ENCODE measurements at regions of chr7 and their contacts with region 1.

Region 1: GRCh38 chr7:100705753-100706671 is at the start of gene POP7:
- DNase-seq: peak; percentile 98
- ATAC-seq: peak; percentile 94
- H3K4me3 Mint-ChIP-seq: peak within 1 kb of the TSS; percentile 93
- H3K27ac Mint-ChIP-seq: peak within 1 kb of the TSS; percentile 88
- H3K4me1 Mint-ChIP-seq: peaks cover 16% of the 10 kb centered on the region
- H3K27me3 Mint-ChIP-seq: no peaks in the 10 kb centered on the region
- CTCF ChIP-seq: no peak
- total RNA-seq, gene POP7: 21.5 and 21.7 TPM in 2 replicates

Region 2: DNA sequence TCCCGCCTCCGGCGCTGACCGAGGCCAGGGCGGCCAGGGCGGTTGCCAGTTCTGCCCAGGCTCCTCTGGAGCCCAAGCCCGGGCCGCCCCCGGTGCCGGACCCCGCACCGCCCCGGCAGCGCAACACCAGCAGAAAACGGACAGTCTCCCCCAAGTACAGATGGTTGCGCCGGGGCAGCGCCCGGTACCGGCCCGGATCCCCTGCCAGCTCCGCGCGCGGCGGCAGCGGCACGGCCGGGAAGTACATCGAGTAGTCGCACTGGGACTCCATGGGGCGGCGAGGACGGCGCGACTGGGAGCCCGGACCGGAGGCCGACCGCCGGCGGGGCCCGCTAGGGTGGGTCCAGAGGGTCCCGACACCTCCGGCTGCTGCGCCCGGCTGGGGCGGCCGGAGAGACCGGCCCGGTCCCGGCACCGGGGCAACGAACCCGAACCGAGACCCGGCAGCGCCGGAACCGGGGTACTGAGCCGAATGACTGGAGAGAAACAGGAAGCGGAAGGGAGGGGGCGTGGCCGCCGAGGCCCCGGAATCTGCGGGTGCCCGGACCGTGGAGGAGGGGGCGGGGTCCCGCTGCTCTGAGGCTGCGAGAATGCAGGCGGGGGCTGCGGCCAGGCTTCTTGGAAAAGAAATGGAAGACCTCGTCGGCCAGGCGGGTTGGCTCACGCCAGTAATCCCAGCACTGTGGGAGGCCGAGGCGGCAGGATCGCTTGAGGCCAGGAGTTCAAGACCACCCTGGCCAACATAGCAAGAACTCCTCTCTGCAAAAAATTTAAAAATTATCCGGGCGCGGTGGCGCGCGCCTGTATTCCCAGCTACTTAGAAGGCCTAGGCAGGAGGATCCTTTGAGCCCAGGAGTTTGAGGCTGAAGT is 547.5 kb before region 1 on chr7 and contains the start of gene TRAPPC14:
- CTCF ChIA-PET with region 1: no interaction called
- POLR2A ChIA-PET with region 1: interaction called, 13 read pairs
- intact Hi-C with region 1: no loop called
- DNase-seq: peak; percentile 93
- ATAC-seq: peak; percentile 89
- H3K4me3 Mint-ChIP-seq: peak within 1 kb of the TSS; percentile 85
- H3K27ac Mint-ChIP-seq: peak within 1 kb of the TSS; percentile 86
- H3K4me1 Mint-ChIP-seq: peaks cover 44% of the 10 kb centered on the region
- H3K27me3 Mint-ChIP-seq: no peaks in the 10 kb centered on the region
- CTCF ChIP-seq: no peak
- total RNA-seq, gene TRAPPC14: 55.7 and 65.3 TPM in 2 replicates

Region 3: GRCh38 chr7:100595188-100595587 is 110.8 kb before region 1 on chr7:
- CTCF ChIA-PET with region 1: no interaction called
- POLR2A ChIA-PET with region 1: no interaction called
- intact Hi-C with region 1: no loop called
- DNase-seq: no peak
- ATAC-seq: no peak
- H3K4me3 Mint-ChIP-seq: no peak overlapping the region
- H3K27ac Mint-ChIP-seq: no peak overlapping the region
- H3K4me1 Mint-ChIP-seq: no peaks in the 10 kb centered on the region
- H3K27me3 Mint-ChIP-seq: peaks cover 10% of the 10 kb centered on the region
- CTCF ChIP-seq: no peak

Region 4: GRCh38 chr7:100632951-100633717 is 72.9 kb before region 1 on chr7:
- CTCF ChIA-PET with region 1: interaction called, 22 read pairs
- POLR2A ChIA-PET with region 1: interaction called, 17 read pairs
- intact Hi-C with region 1: loop called (anchors 1 kb)
- DNase-seq: peak; percentile 63
- ATAC-seq: peak; percentile 71
- H3K4me3 Mint-ChIP-seq: peak overlapping the region; percentile 89
- H3K27ac Mint-ChIP-seq: peak overlapping the region; percentile 78
- H3K4me1 Mint-ChIP-seq: peaks cover 4% of the 10 kb centered on the region
- H3K27me3 Mint-ChIP-seq: no peaks in the 10 kb centered on the region
- CTCF ChIP-seq: no peak

Region 5: GRCh38 chr7:100673300-100673941 is 32.6 kb before region 1 on chr7 and contains the start of gene GNB2:
- CTCF ChIA-PET with region 1: interaction called, 3 read pairs
- POLR2A ChIA-PET with region 1: interaction called, 24 read pairs
- intact Hi-C with region 1: loop called (anchors 1 kb)
- DNase-seq: peak; percentile 99
- ATAC-seq: peak; percentile 67
- H3K4me3 Mint-ChIP-seq: peak within 1 kb of the TSS; percentile 97
- H3K27ac Mint-ChIP-seq: peak within 1 kb of the TSS; percentile 95
- H3K4me1 Mint-ChIP-seq: peaks cover 11% of the 10 kb centered on the region
- H3K27me3 Mint-ChIP-seq: no peaks in the 10 kb centered on the region
- CTCF ChIP-seq: no peak
- total RNA-seq, gene GNB2: 129 and 132 TPM in 2 replicates

Region 6: GRCh38 chr7:100803398-100804233 is 97.6 kb after region 1 on chr7:
- CTCF ChIA-PET with region 1: interaction called, 9 read pairs
- POLR2A ChIA-PET with region 1: interaction called, 4 read pairs
- intact Hi-C with region 1: loop called (anchors 2 kb)
- DNase-seq: peak; percentile 62
- ATAC-seq: peak; percentile 97
- H3K4me3 Mint-ChIP-seq: peak overlapping the region; percentile 76
- H3K27ac Mint-ChIP-seq: peak overlapping the region; percentile 84
- H3K4me1 Mint-ChIP-seq: peaks cover 36% of the 10 kb centered on the region
- H3K27me3 Mint-ChIP-seq: no peaks in the 10 kb centered on the region
- CTCF ChIP-seq: no peak

Region 7: DNA sequence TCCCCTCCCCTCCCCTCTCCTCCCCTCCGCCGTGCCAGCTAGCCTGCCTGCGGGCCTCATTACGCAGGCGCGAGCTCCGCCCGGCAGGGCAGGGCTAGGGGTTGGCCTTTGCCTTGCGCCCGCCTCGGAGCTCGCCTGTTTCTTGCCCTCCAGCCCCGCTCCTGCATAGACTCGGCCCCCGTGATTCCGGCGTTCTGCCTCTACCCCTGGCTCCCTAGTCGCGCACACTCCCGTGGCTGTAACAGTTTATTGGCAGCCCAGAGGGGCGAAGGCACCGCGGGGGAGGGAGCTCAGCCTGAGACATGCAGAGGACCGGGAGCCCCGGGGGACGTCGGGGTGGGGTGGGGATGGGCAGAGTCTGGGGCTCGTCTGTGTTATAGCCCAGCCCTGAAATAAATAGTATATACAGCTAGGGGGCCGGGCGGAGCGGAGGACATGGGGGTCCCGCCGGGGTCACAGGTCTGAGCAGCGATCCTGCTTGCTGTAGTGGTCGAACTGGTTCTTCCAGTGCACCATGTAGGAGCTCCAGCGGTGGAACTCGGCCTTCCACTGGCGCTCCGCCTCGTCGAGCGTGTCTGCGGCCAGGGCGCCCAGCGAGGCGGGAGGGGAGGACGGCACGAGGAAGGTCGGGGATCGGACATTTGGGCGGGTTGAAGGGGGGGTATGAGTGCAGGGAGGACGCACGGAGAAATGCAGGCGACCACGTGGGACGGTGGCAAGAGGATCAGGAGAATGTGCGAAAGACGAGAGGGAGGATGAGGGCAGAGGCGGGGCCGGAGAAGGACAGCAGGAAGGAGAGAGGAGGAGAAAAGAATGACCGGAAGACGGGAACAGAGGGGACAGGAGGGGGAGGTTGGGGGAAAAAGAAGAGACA is 184.0 kb after region 1 on chr7:
- CTCF ChIA-PET with region 1: interaction called, 4 read pairs
- POLR2A ChIA-PET with region 1: interaction called, 12 read pairs
- intact Hi-C with region 1: no loop called
- DNase-seq: peak; percentile 89
- ATAC-seq: peak; percentile 85
- H3K4me3 Mint-ChIP-seq: peak overlapping the region; percentile 87
- H3K27ac Mint-ChIP-seq: peak overlapping the region; percentile 76
- H3K4me1 Mint-ChIP-seq: peaks cover 50% of the 10 kb centered on the region
- H3K27me3 Mint-ChIP-seq: peaks cover 23% of the 10 kb centered on the region
- CTCF ChIP-seq: no peak

Region 8: DNA sequence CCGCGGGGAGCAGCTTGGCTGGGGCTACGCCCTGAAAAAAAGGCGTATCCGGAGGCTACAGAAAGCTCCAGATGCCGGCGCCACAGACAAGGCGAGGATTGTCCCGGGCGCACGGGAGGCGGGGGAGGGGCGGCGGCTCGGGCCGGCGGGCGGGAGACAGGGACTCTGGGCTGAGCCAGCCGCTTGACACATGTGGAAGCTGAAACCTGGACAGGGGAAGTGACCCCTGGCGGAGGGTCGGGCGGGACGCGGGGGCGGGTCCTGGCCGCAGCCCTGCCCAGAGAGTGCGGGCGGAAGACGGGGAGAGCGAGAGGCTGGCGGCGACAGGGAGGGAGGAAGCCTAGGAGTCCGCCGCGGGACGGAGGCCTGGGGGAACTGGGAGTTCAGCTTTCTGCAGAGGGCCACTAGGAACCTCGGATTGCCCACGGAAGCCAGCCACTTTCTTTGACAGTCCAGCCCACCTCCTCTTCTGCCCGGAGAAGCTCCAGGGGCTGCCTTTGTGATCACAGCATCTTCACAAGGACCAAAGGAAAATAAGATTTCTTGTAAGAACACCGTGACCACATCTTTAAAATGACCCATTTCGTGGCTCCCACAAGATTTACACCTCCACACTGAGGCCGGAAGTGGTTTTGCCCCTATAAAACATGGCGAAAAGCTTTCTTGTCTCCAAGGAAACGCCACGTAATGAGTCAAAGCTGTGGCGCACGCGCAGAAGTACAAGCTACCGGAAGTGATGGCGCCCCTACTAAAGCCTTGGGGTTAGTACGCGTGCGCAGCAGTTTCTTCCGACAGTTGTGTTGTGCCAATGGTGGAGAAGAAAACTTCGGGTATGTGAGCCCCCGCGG is 511.6 kb after region 1 on chr7 and contains the starts of genes PLOD3 and ZNHIT1:
- CTCF ChIA-PET with region 1: no interaction called
- POLR2A ChIA-PET with region 1: no interaction called
- intact Hi-C with region 1: loop called (anchors 1 kb)
- DNase-seq: peak; percentile 82
- ATAC-seq: peak; percentile 77
- H3K4me3 Mint-ChIP-seq: peak within 1 kb of the TSS; percentile 94
- H3K27ac Mint-ChIP-seq: peak within 1 kb of the TSS; percentile 84
- H3K4me1 Mint-ChIP-seq: peaks cover 30% of the 10 kb centered on the region
- H3K27me3 Mint-ChIP-seq: no peaks in the 10 kb centered on the region
- CTCF ChIP-seq: no peak
- total RNA-seq, gene PLOD3: 29.8 and 40.0 TPM in 2 replicates
- total RNA-seq, gene ZNHIT1: 37.6 and 43.4 TPM in 2 replicates

Measured in activated B cell treated with CpG ODN at 0.5 μM for 24 hours (primary cell).